Caco-2 (cell line): ENCODE measurements at regions of chr17 and their contacts with region 1.

Region 1: DNA sequence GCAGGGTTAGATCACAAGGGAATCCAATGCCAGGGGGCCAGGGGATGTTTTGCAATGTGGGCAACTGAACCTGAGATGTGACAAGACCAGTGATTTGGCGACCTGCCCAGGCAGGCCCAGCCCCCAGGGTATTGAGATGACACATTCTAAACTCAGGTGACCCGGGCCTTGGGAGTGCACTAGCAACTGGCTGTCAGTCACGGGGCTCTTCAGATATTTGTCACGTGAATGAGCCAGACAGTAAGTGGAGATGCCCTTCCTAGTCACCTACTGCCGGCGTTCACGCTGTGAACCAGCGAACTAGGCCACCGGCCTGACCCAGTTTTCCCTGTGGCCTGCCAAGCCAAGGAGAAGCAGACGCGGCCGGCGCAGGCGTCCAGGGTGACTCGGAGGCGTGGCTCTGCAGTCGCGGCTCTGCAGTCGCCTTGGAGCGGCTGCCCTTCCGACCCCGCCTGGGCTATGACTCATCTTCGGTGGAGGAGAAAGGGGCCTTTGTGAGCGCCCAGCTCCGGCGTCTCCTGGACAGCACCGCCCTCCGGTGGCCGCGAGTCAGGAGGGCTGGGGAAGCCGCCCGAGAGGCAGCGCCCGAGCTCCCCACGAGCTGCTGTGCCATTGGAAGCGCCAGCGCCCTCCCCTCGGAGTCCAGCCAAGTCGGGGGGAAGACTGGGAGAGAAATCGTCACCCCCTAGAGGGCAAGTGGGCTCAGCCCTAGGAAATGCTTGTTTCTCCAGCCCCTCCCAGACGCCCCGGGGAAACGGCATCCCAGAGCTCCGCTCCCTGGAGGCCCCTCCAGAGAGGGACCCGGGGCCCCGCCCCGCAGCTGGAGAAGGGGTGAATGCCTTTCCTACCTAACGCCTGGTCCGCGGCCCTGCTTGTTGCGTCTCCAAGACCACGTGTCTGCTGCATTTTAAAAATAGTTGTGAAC is 38.8 kb downstream of the WSB1 start:
- DNase-seq: peak; percentile 99
- H3K4me3 ChIP-seq: peak overlapping the region; percentile 44
- H3K4me3 Mint-ChIP-seq: peak overlapping the region; percentile 73
- H3K27ac Mint-ChIP-seq: peak overlapping the region; percentile 93
- H3K4me1 ChIP-seq: peaks cover 10% of the 10 kb centered on the region
- H3K4me1 Mint-ChIP-seq: peaks cover 26% of the 10 kb centered on the region
- H3K27me3 ChIP-seq: no peaks in the 10 kb centered on the region
- H3K27me3 Mint-ChIP-seq: no peaks in the 10 kb centered on the region
- CTCF ChIP-seq: peak; percentile 93 to 94

Region 2: GRCh38 chr17:27245230-27245696 is 87.5 kb before region 1 on chr17:
- CTCF ChIA-PET with region 1: interaction called, 122 read pairs
- POLR2A ChIA-PET with region 1: interaction called, 4 read pairs
- intact Hi-C with region 1: loop called (anchors 1 kb)
- DNase-seq: peak; percentile 90
- H3K4me3 ChIP-seq: no peak overlapping the region
- H3K4me3 Mint-ChIP-seq: peak overlapping the region; percentile 46
- H3K27ac Mint-ChIP-seq: peak overlapping the region; percentile 5
- H3K4me1 ChIP-seq: peaks cover 42% of the 10 kb centered on the region
- H3K4me1 Mint-ChIP-seq: peaks cover 37% of the 10 kb centered on the region
- H3K27me3 ChIP-seq: no peaks in the 10 kb centered on the region
- H3K27me3 Mint-ChIP-seq: no peaks in the 10 kb centered on the region
- CTCF ChIP-seq: peak; percentile 75 to 89

Region 3: DNA sequence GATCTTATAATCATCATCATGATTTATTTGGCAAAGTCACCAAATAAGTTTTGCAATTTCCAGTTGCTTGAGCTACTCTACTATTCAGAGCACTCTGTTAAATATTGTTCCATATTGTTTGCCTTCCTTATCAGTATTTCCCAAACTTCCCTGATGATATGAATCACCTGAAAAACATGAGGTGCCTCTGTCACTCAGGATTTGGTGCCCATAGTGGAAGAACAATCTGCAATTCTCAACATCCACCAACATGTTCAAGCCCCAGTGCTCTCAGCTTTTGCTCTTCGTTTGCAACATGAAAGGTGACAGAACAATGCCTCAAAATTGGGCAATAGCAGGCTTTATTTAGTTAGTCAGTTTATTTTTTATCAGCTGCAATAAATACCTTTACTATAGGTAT is 67.4 kb before region 1 on chr17:
- CTCF ChIA-PET with region 1: no interaction called
- POLR2A ChIA-PET with region 1: no interaction called
- intact Hi-C with region 1: loop called (anchors 1 kb)
- DNase-seq: peak; percentile 71 to 74
- H3K4me3 ChIP-seq: no peak overlapping the region
- H3K4me3 Mint-ChIP-seq: no peak overlapping the region
- H3K27ac Mint-ChIP-seq: peak overlapping the region; percentile 20
- H3K4me1 ChIP-seq: peaks cover 31% of the 10 kb centered on the region
- H3K4me1 Mint-ChIP-seq: peaks cover 29% of the 10 kb centered on the region
- H3K27me3 ChIP-seq: no peaks in the 10 kb centered on the region
- H3K27me3 Mint-ChIP-seq: no peaks in the 10 kb centered on the region
- CTCF ChIP-seq: no peak

Region 4: GRCh38 chr17:27293898-27294688 is 38.7 kb before region 1 on chr17 and contains the start of gene WSB1:
- CTCF ChIA-PET with region 1: interaction called, 19 read pairs
- POLR2A ChIA-PET with region 1: interaction called, 20 read pairs
- intact Hi-C with region 1: loop called (anchors 1 kb)
- DNase-seq: peak; percentile 92 to 96
- H3K4me3 ChIP-seq: peak within 1 kb of the TSS; percentile 100
- H3K4me3 Mint-ChIP-seq: peak within 1 kb of the TSS; percentile 98
- H3K27ac Mint-ChIP-seq: peak within 1 kb of the TSS; percentile 97
- H3K4me1 ChIP-seq: peaks cover 13% of the 10 kb centered on the region
- H3K4me1 Mint-ChIP-seq: peaks cover 27% of the 10 kb centered on the region
- H3K27me3 ChIP-seq: no peaks in the 10 kb centered on the region
- H3K27me3 Mint-ChIP-seq: no peaks in the 10 kb centered on the region
- CTCF ChIP-seq: peak in 1 of 2 experiments; percentile 2
- total RNA-seq, gene WSB1: 149 and 157 TPM in 2 replicates

Region 5: DNA sequence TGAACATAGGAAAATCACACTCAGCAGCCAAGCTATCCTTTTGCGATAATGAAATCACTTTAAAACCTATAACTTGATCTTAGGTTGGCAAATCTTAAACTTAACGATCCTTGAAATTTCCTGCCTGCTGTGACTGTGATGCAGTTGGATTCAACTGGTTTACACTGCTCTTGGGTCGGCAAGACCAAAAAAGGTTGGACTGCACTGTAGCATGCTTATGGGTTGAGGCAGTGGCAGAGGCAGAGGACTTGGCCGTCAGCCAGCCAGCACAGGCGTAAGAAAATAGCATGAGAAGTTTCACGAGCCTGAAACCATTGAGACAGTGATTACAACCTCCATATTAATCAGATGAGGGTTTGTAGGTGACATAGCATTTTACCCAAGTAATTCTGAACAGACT is 17.4 kb before region 1 on chr17:
- CTCF ChIA-PET with region 1: interaction called, 7 read pairs
- POLR2A ChIA-PET with region 1: no interaction called
- intact Hi-C with region 1: loop called (anchors 2 kb)
- DNase-seq: no peak
- H3K4me3 ChIP-seq: no peak overlapping the region
- H3K4me3 Mint-ChIP-seq: no peak overlapping the region
- H3K27ac Mint-ChIP-seq: no peak overlapping the region
- H3K4me1 ChIP-seq: peaks cover 14% of the 10 kb centered on the region
- H3K4me1 Mint-ChIP-seq: peaks cover 15% of the 10 kb centered on the region
- H3K27me3 ChIP-seq: no peaks in the 10 kb centered on the region
- H3K27me3 Mint-ChIP-seq: no peaks in the 10 kb centered on the region
- CTCF ChIP-seq: no peak

Region 6: DNA sequence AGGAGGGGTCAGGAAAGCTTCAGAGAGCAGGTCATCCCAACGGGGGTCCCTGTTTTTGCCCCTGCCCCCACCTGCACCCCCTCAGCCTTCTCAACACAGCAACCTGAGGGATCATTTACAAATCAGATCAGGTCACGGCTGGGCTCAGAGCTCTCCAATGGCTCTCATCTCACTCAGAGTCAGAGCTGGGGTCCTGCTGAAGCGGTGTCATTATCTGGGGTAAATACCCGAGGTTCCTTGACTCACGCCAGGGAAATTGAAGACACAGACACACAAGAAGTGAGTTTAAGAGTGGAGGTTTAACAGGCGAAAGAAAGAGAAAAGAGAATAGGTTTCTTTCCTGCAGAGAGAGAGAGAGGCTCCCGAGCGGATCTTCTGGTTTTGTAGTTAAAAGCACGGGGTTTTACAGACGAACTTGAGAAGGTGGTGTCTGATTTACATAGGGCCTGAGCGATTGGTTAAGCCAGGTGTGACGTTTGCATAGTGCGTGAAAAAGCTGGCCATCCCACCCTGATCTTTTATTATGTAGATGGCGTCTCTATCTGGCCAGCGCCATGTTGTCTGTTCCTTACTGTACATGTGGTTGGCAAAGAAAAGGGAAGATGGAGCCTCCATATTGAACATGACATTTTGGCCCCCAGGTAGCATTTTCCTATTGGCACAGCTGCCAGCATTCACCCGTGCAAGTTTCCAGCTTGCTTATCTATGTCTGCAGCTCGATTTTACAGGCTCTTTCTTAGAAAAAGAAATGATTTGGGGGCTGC is 12.6 kb after region 1 on chr17:
- CTCF ChIA-PET with region 1: interaction called, 10 read pairs
- POLR2A ChIA-PET with region 1: no interaction called
- intact Hi-C with region 1: no loop called
- DNase-seq: no peak
- H3K4me3 ChIP-seq: no peak overlapping the region
- H3K4me3 Mint-ChIP-seq: no peak overlapping the region
- H3K27ac Mint-ChIP-seq: no peak overlapping the region
- H3K4me1 ChIP-seq: peaks cover 7% of the 10 kb centered on the region; the same call in 1 of the 2 replicates
- H3K4me1 Mint-ChIP-seq: no peaks in the 10 kb centered on the region
- H3K27me3 ChIP-seq: no peaks in the 10 kb centered on the region
- H3K27me3 Mint-ChIP-seq: no peaks in the 10 kb centered on the region
- CTCF ChIP-seq: no peak